Sciatic nerve (tissue), 2 donors: ENCODE measurements at regions of chr18 and their contacts with region 1.

Region 1: DNA sequence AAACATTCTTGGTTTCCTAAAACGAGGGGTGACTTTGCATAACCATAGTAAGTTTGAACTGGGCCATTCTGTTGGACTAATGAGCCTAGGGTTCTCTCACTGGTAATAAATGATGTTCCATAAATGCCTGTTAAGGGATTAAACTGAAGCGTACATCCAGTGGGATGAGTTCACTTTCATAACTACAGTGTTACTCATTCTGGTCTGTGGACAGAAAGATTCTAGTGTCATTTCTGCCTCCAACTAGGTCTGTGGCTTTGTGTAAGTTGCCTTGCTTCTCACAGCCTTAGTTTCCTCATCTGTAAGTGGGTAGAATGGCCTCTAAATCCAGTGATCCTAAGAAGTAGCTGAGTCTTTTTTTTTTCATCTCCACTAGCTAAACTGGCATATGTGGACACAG is 1860.6 kb upstream of the PIK3C3 start:
- DNase-seq: no peak
- ATAC-seq: no peak

Region 2: GRCh38 chr18:38923126-38923525 is 1171.3 kb before region 1 on chr18:
- intact Hi-C with region 1: no loop called
- DNase-seq: no peak
- ATAC-seq: no peak

Region 3: GRCh38 chr18:40148960-40149359 is 54.5 kb after region 1 on chr18:
- intact Hi-C with region 1: no loop called
- DNase-seq: no peak
- ATAC-seq: no peak

Region 4: GRCh38 chr18:40565805-40566509 is 471.5 kb after region 1 on chr18:
- intact Hi-C with region 1: loop called (anchors 5 kb)
- DNase-seq: no peak
- ATAC-seq: no peak